Dorsolateral prefrontal cortex (tissue), 120 donors: ENCODE measurements at regions of chr2 and their contacts with region 1.

Region 1: DNA sequence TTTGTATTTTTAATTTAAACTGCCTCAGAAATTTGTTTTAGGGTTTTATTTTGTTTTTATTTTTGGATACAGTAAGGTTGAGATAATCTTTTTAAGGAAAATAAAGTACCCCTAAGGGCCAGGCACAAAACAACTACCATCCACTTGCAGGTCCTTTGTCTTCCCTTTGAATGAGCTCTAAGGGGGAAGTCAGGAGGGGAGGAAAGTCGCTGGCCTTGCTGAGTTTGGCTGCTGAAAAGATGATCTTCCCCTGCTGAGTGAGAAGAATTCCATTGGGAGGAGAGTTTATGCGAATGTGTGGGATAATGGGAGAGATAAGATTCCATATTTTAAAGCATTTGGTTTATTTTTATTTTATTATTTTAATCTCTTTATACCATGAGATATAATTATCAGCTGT is 100.7 kb downstream of the ARHGAP15 start:
- DNase-seq: no peak
- H3K4me3 ChIP-seq: no peak overlapping the region
- H3K27ac ChIP-seq: no peak overlapping the region
- H3K27me3 ChIP-seq: no peaks in the 10 kb centered on the region
- CTCF ChIP-seq: no peak

Region 2: GRCh38 chr2:143128681-143129580 is 101.0 kb before region 1 on chr2 and contains the start of gene ARHGAP15:
- intact Hi-C with region 1: loop called (anchors 10 kb)
- DNase-seq: no peak
- H3K4me3 ChIP-seq: peak within 1 kb of the TSS in 16 of 59 donors; percentile 0 to 37 (median 10)
- H3K27ac ChIP-seq: peak within 1 kb of the TSS in 7 of 59 donors; percentile 8 to 51 (median 41)
- H3K27me3 ChIP-seq: no peaks in the 10 kb centered on the region
- CTCF ChIP-seq: no peak
- total RNA-seq, gene ARHGAP15: 1.1 to 11.9 (median 4.4) TPM in 119 of 120 experiments, not detected in the other

Region 3: GRCh38 chr2:143162123-143162837 is 67.7 kb before region 1 on chr2:
- intact Hi-C with region 1: loop called in 1 of 2 experiments (anchors 10 kb)
- DNase-seq: peak in 9 of 10 donors; percentile 23 to 58 (median 49)
- H3K4me3 ChIP-seq: peak overlapping the region in 23 of 59 donors; percentile 2 to 43 (median 20)
- H3K27ac ChIP-seq: peak overlapping the region in 7 of 59 donors; percentile 6 to 38 (median 13)
- H3K27me3 ChIP-seq: peaks cover 0 to 5% (median 0%) of the 10 kb centered on the region in 45 donors
- CTCF ChIP-seq: peak in 55 of 56 donors; percentile 36 to 75 (median 59)